A549 (cell line): ENCODE measurements at regions of chr12 and their contacts with region 1.

Region 1: DNA sequence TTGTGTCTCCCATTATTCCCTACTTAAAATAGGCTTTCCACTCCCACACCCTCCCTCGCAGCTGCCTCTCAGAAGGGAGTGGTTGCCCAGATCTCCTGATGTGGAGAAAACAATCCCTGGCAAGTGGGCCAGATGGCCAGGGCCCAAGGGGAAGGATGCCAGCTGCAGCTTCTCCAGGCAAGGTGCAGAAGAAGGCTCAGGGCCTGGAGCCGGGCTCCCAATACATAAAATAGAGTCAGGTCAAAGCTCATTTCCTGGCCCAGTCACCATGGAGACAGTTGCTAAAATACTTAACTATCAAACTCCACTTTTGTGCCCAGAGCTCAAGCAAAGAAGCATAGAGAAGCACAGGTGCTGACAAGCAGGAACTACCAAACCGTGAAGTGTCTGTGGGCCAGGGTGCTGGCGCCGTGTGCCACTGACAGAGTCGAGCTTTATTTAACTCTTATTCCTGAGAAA is 45.7 kb upstream of the ITPR2 start:
- DNase-seq: no peak
- ATAC-seq: no peak
- H3K4me3 ChIP-seq: no peak overlapping the region
- H3K27ac ChIP-seq: no peak overlapping the region
- H3K4me1 ChIP-seq: no peaks in the 10 kb centered on the region
- CTCF ChIP-seq: no peak
- EP300 ChIP-seq: no peak
- POLR2A ChIP-seq: no peak
- RAD21 ChIP-seq: no peak

Region 2: DNA sequence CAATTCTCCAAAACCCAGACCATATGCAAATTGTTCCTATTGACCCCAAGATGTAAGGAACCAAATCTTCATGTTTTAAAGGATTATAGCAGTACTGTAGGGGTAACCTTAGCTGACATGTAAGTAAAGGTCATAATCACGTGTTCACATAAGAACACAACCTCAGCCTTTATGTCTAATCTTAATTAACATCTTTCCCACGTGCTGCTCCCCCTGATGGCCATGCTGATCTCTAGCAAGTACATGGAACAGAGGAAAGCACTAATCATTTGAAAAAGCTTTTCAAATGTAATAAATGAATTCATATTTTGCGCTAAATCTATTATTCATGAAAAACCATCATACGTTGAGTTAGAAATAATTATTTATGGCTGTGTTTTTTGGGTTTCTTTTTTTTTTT is 15.2 kb before region 1 on chr12:
- CTCF ChIA-PET with region 1: interaction called, 12 read pairs
- POLR2A ChIA-PET with region 1: no interaction called
- DNase-seq: peak in 1 of 2 experiments; percentile 18
- ATAC-seq: no peak
- H3K4me3 ChIP-seq: no peak overlapping the region
- H3K27ac ChIP-seq: no peak overlapping the region
- H3K4me1 ChIP-seq: no peaks in the 10 kb centered on the region
- CTCF ChIP-seq: no peak
- EP300 ChIP-seq: no peak
- POLR2A ChIP-seq: no peak
- RAD21 ChIP-seq: no peak

Region 3: GRCh38 chr12:26906704-26907103 is 28.0 kb after region 1 on chr12:
- CTCF ChIA-PET with region 1: no interaction called
- POLR2A ChIA-PET with region 1: no interaction called
- DNase-seq: no peak
- ATAC-seq: no peak
- H3K4me3 ChIP-seq: no peak overlapping the region
- H3K27ac ChIP-seq: no peak overlapping the region
- H3K4me1 ChIP-seq: no peaks in the 10 kb centered on the region
- CTCF ChIP-seq: no peak
- EP300 ChIP-seq: no peak
- POLR2A ChIP-seq: no peak
- RAD21 ChIP-seq: no peak

Region 4: DNA sequence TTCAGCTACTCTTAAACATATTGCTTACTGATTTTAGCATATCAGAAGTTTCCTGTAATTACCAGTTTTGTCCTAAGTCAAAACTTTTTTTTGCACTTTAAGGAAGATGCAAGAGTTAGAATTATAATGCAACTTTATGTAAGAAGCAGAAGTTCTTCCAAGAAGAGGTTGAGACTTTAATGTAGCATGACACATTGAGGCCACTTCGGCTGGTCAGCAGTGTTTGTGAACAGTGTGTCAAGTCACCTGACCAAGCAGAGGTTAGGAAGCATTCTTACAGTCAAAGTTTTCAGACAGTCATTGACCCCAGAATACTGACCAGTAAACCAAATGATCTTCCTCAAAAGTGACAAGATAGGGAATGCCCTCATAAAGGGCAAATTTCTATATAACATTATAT is 74.8 kb after region 1 on chr12:
- CTCF ChIA-PET with region 1: no interaction called
- POLR2A ChIA-PET with region 1: no interaction called
- DNase-seq: no peak
- ATAC-seq: no peak
- H3K4me3 ChIP-seq: no peak overlapping the region
- H3K27ac ChIP-seq: no peak overlapping the region
- H3K4me1 ChIP-seq: no peaks in the 10 kb centered on the region
- CTCF ChIP-seq: no peak
- EP300 ChIP-seq: no peak
- POLR2A ChIP-seq: no peak
- RAD21 ChIP-seq: no peak